Caco-2 (cell line): ENCODE measurements at regions of chr2 and their contacts with region 1.

Region 1: DNA sequence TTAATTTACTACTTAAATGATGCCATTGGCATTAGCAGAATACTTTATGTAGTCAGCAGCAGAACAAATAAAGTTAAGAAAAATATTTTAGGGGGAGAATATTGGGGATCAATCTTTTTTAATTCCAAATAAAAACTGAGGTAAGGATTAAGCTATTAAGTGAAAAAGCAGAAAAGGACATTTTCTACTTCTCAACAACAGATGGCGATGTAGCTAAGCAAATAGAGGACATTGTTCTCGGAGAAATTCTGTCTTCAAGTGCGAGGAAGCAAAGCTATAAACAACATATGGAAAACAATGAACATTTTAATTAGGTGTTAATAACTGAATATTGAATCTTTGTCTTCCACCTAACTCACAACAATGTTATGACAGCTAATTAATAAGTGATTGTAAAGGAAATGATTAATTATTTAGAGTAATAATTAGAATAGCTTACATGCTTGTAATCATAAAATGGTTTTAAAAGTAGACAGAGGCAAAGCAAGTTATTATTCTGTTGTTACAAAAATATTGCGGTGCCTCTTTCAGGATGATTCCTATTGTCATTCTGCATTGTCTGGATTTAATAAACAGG is 32.9 kb upstream of the CCDC93 start:
- DNase-seq: peak in 1 of 2 experiments; percentile 4
- H3K4me3 ChIP-seq: no peak overlapping the region
- H3K4me3 Mint-ChIP-seq: no peak overlapping the region
- H3K27ac Mint-ChIP-seq: no peak overlapping the region
- H3K4me1 ChIP-seq: no peaks in the 10 kb centered on the region
- H3K4me1 Mint-ChIP-seq: no peaks in the 10 kb centered on the region
- H3K27me3 ChIP-seq: no peaks in the 10 kb centered on the region; the same call in 1 of the 2 replicates
- H3K27me3 Mint-ChIP-seq: peaks cover 20% of the 10 kb centered on the region
- CTCF ChIP-seq: peak; percentile 58 to 70

Region 2: DNA sequence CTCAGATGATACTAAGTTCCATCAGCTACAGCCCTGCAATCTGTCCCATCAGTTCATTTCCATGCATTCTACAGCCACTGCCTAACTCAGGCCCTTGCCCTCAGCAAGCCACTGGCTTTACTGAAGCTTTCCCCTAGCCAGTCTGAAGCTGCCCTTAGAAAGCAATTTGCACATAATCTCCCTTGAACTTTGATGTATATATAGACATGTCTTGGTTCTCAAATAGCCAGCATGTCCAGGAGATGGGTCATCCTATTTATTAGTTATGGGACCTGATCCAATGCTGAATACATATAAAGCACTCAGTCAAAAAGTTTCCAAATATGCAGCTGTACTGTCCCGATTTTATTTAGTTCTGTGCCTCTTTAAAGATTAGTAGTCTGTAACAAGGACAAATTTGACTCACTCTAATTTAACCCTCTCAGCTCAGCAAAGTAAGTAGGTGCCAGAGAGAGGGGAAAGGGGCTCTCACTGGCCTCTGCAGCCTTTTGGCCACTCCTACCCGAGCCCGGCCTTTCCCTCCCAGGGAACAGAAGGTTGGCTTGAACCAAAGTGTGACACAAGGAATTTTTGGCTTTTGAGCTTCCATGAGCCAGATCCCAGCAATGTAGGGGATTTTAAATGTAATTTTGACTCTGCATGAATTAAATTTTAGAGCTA is 103.6 kb before region 1 on chr2:
- CTCF ChIA-PET with region 1: no interaction called
- POLR2A ChIA-PET with region 1: no interaction called
- intact Hi-C with region 1: no loop called
- DNase-seq: no peak
- H3K4me3 ChIP-seq: no peak overlapping the region
- H3K4me3 Mint-ChIP-seq: no peak overlapping the region
- H3K27ac Mint-ChIP-seq: no peak overlapping the region
- H3K4me1 ChIP-seq: no peaks in the 10 kb centered on the region
- H3K4me1 Mint-ChIP-seq: no peaks in the 10 kb centered on the region
- H3K27me3 ChIP-seq: no peaks in the 10 kb centered on the region
- H3K27me3 Mint-ChIP-seq: no peaks in the 10 kb centered on the region
- CTCF ChIP-seq: no peak

Region 3: GRCh38 chr2:118032169-118033013 is 14.3 kb before region 1 on chr2:
- CTCF ChIA-PET with region 1: interaction called, 10 read pairs
- POLR2A ChIA-PET with region 1: no interaction called
- intact Hi-C with region 1: no loop called
- DNase-seq: peak in 1 of 2 experiments; percentile 42
- H3K4me3 ChIP-seq: no peak overlapping the region
- H3K4me3 Mint-ChIP-seq: no peak overlapping the region
- H3K27ac Mint-ChIP-seq: no peak overlapping the region
- H3K4me1 ChIP-seq: no peaks in the 10 kb centered on the region
- H3K4me1 Mint-ChIP-seq: no peaks in the 10 kb centered on the region
- H3K27me3 ChIP-seq: no peaks in the 10 kb centered on the region
- H3K27me3 Mint-ChIP-seq: peaks cover 19% of the 10 kb centered on the region
- CTCF ChIP-seq: peak; percentile 71 to 76

Region 4: GRCh38 chr2:118061135-118061955 is 14.6 kb after region 1 on chr2:
- CTCF ChIA-PET with region 1: interaction called, 9 read pairs
- POLR2A ChIA-PET with region 1: no interaction called
- intact Hi-C with region 1: loop called (anchors 1 kb)
- DNase-seq: peak in 1 of 2 experiments; percentile 48
- H3K4me3 ChIP-seq: no peak overlapping the region
- H3K4me3 Mint-ChIP-seq: no peak overlapping the region
- H3K27ac Mint-ChIP-seq: no peak overlapping the region
- H3K4me1 ChIP-seq: no peaks in the 10 kb centered on the region
- H3K4me1 Mint-ChIP-seq: no peaks in the 10 kb centered on the region
- H3K27me3 ChIP-seq: no peaks in the 10 kb centered on the region
- H3K27me3 Mint-ChIP-seq: peaks cover 3% of the 10 kb centered on the region
- CTCF ChIP-seq: peak; percentile 23 to 46

Region 5: GRCh38 chr2:118088051-118089024 is 41.6 kb after region 1 on chr2 and contains the start of gene INSIG2:
- CTCF ChIA-PET with region 1: interaction called, 13 read pairs
- POLR2A ChIA-PET with region 1: no interaction called
- intact Hi-C with region 1: no loop called
- DNase-seq: peak; percentile 97 to 99
- H3K4me3 ChIP-seq: peak within 1 kb of the TSS; percentile 88
- H3K4me3 Mint-ChIP-seq: peak within 1 kb of the TSS; percentile 82
- H3K27ac Mint-ChIP-seq: peak within 1 kb of the TSS; percentile 72
- H3K4me1 ChIP-seq: 0 out of 2 replicates have a peak, but pooled peaks cover 16% of the 10 kb centered on the region
- H3K4me1 Mint-ChIP-seq: no peaks in the 10 kb centered on the region
- H3K27me3 ChIP-seq: no peaks in the 10 kb centered on the region
- H3K27me3 Mint-ChIP-seq: peaks cover 5% of the 10 kb centered on the region
- CTCF ChIP-seq: peak in 1 of 2 experiments; percentile 14
- total RNA-seq, gene INSIG2: 12.2 and 14.1 TPM in 2 replicates

Region 6: GRCh38 chr2:118098307-118099030 is 51.7 kb after region 1 on chr2:
- CTCF ChIA-PET with region 1: no interaction called
- POLR2A ChIA-PET with region 1: no interaction called
- intact Hi-C with region 1: no loop called
- DNase-seq: no peak
- H3K4me3 ChIP-seq: no peak overlapping the region
- H3K4me3 Mint-ChIP-seq: no peak overlapping the region
- H3K27ac Mint-ChIP-seq: no peak overlapping the region
- H3K4me1 ChIP-seq: no peaks in the 10 kb centered on the region
- H3K4me1 Mint-ChIP-seq: no peaks in the 10 kb centered on the region
- H3K27me3 ChIP-seq: no peaks in the 10 kb centered on the region
- H3K27me3 Mint-ChIP-seq: no peaks in the 10 kb centered on the region
- CTCF ChIP-seq: no peak

Region 7: DNA sequence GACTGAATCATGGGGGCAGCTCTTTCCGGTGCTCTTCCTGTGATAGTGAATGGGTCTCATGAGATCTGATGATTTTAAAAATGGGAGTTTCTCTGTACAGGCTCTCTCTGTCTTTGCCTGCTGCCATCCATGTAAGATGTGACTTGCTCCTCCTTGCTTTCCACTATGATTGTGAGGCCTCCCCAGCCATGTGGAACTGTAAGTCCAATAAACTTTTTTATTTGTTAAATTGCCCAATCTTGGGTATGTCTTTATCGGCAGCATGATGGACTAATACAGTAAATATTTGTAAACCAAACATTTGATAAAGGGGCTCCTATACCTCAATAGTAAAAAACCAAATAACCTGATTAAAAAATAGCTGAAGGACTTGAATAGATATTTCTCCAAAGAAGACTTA is 118.9 kb after region 1 on chr2:
- CTCF ChIA-PET with region 1: no interaction called
- POLR2A ChIA-PET with region 1: no interaction called
- intact Hi-C with region 1: no loop called
- DNase-seq: no peak
- H3K4me3 ChIP-seq: no peak overlapping the region
- H3K4me3 Mint-ChIP-seq: no peak overlapping the region
- H3K27ac Mint-ChIP-seq: no peak overlapping the region
- H3K4me1 ChIP-seq: no peaks in the 10 kb centered on the region
- H3K4me1 Mint-ChIP-seq: no peaks in the 10 kb centered on the region
- H3K27me3 ChIP-seq: no peaks in the 10 kb centered on the region
- H3K27me3 Mint-ChIP-seq: no peaks in the 10 kb centered on the region
- CTCF ChIP-seq: no peak

Region 8: GRCh38 chr2:118186110-118186857 is 139.6 kb after region 1 on chr2:
- CTCF ChIA-PET with region 1: interaction called, 4 read pairs
- POLR2A ChIA-PET with region 1: no interaction called
- intact Hi-C with region 1: loop called (anchors 5 kb)
- DNase-seq: peak; percentile 86 to 88
- H3K4me3 ChIP-seq: peak overlapping the region; percentile 59
- H3K4me3 Mint-ChIP-seq: peak overlapping the region; percentile 88
- H3K27ac Mint-ChIP-seq: peak overlapping the region; percentile 84
- H3K4me1 ChIP-seq: no peaks in the 10 kb centered on the region
- H3K4me1 Mint-ChIP-seq: peaks cover 5% of the 10 kb centered on the region
- H3K27me3 ChIP-seq: no peaks in the 10 kb centered on the region
- H3K27me3 Mint-ChIP-seq: peaks cover 3% of the 10 kb centered on the region
- CTCF ChIP-seq: no peak

Region 9: DNA sequence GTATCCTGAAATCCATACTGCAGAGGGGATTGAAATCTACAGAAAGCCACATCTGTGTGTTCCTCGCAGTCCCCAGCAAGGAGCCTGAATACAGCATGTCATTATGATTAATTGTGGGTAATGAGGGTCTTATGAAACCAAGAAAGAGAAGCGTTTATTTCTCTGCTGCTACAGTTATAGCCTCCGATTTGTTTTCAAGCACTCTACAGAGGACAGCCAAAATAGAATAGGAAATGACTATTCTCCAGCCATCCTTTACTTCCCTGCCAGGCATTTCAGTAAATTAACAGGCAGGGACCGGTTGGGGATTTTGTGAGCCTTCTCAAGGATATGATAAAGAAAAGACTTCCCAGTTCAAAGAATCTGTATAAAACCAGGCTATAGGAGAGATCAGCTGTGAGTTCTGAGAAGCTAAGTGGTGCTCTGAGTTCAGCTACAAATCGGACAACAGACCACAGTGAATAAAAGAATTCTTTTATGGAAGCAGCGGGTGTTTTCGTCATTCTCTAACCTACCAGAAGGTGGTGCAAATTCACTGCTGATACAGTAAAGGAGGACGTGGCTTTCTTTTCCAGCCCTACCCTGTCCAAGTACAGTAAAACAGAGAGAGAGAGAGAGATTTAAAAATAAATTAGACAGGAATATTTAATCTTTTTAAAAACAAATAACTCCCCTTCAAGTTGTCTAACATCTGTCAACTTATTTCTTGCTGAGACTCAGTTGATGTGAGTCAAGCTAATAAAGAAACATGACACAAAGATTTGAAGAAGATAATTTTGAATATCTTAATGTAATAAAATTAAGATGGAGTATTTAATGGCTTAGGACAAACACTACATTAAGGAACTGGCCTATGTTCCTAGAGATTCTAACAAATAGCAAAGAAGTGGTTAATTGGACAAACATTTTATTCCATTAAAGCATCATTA is 175.2 kb after region 1 on chr2:
- CTCF ChIA-PET with region 1: interaction called, 4 read pairs
- POLR2A ChIA-PET with region 1: no interaction called
- intact Hi-C with region 1: loop called (anchors 10 kb)
- DNase-seq: peak in 1 of 2 experiments; percentile 63
- H3K4me3 ChIP-seq: no peak overlapping the region
- H3K4me3 Mint-ChIP-seq: no peak overlapping the region
- H3K27ac Mint-ChIP-seq: no peak overlapping the region
- H3K4me1 ChIP-seq: no peaks in the 10 kb centered on the region
- H3K4me1 Mint-ChIP-seq: no peaks in the 10 kb centered on the region
- H3K27me3 ChIP-seq: peaks cover 4% of the 10 kb centered on the region
- H3K27me3 Mint-ChIP-seq: peaks cover 23% of the 10 kb centered on the region
- CTCF ChIP-seq: peak; percentile 67 to 72